Activated naive CD4-positive, alpha-beta T cell treated with anti-CD3 and anti-CD28 coated beads for 36 hours (primary cell): ENCODE measurements at regions of chr16 and their contacts with region 1.

Region 1: DNA sequence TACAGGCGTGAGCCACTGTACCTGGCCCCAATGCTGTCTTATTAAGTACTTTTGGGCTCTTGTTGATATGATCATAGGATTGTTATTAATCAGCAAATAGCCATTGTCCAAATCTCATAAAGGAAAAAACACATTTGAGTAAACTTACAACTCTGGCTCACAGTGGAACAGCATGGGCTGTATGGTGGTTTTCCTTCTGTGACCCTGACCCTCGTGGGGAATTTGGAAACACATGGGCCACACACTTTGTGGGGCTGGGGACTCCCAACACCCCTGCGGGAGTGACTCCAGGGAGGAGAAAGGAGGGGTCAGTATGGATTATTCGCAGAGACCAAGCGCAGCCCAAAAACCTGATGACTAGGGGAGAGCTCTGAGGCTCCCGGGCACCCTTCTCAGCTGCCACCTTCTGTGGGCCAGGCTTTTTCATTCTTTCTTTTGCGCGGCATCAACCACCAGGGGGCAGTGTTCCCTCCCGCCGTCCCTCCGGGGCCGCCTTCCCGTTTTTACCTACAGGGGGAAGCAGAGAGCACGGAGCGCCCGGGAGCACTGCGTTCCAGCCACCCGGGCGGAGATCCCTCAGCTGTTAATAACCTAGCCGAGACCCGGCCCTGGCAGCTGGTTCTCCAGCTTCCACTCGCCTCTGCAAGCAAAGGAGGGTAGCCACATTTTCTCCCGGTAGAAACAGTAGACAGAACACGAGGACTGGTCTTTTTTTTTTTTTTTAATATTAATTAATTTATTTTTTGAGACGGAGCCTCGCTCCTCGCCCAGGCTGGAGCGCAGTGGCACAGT is 9.7 kb downstream of the TSNAXIP1 start:
- DNase-seq: peak; percentile 93
- H3K4me3 Mint-ChIP-seq: no peak overlapping the region
- H3K27ac Mint-ChIP-seq: no peak overlapping the region
- H3K4me1 Mint-ChIP-seq: peaks cover 4% of the 10 kb centered on the region
- H3K27me3 Mint-ChIP-seq: no peaks in the 10 kb centered on the region

Region 2: DNA sequence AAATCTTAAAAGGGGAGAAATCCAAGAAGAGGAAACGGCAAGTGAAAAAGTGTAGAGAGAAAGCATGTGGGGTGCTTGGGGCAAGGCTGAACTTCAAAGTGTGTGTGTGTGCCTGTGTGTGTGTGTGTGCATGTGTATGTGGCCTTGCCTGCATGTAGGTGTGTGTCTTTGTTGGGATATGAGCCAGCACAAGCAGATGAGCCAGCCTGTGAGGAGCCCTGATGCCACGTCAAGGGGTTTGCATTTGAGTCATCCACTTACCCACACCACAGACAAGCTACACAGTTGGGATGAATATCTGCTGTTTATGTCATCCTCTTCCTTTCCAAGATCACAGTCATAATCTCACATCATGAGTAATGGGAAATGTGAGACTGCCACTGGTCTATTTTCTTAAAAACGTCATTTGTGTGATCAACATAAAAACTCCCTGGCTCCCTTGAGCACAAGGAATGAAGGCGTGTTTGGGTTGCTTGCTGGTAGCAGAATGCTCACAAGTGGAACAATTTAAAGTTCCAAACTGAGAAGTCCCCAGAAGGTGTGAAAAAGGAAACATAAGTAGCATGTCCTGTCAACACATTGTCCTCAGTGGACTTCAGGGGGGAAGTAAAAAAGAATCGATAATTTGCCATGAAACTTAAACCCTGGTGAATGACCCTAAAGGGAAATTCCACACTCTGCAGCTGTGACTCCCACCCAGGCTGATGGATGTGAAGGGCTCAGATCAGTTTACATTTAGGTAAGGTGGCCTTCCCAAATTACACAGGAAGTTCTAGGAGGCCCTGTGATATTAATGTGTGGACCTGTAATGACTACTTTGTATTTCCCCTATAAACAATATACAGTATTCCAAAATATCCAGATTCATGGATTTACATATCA is 504.6 kb before region 1 on chr16:
- CTCF ChIA-PET with region 1: no interaction called
- intact Hi-C with region 1: no loop called
- DNase-seq: peak; percentile 98
- H3K4me3 Mint-ChIP-seq: peak overlapping the region; percentile 13
- H3K27ac Mint-ChIP-seq: peak overlapping the region; percentile 96
- H3K4me1 Mint-ChIP-seq: peaks cover 44% of the 10 kb centered on the region
- H3K27me3 Mint-ChIP-seq: no peaks in the 10 kb centered on the region

Region 3: GRCh38 chr16:67800338-67800926 is 16.0 kb before region 1 on chr16:
- CTCF ChIA-PET with region 1: interaction called, 39 read pairs
- intact Hi-C with region 1: no loop called
- DNase-seq: no peak
- H3K4me3 Mint-ChIP-seq: no peak overlapping the region
- H3K27ac Mint-ChIP-seq: peak overlapping the region; percentile 53
- H3K4me1 Mint-ChIP-seq: peaks cover 61% of the 10 kb centered on the region
- H3K27me3 Mint-ChIP-seq: no peaks in the 10 kb centered on the region

Region 4: DNA sequence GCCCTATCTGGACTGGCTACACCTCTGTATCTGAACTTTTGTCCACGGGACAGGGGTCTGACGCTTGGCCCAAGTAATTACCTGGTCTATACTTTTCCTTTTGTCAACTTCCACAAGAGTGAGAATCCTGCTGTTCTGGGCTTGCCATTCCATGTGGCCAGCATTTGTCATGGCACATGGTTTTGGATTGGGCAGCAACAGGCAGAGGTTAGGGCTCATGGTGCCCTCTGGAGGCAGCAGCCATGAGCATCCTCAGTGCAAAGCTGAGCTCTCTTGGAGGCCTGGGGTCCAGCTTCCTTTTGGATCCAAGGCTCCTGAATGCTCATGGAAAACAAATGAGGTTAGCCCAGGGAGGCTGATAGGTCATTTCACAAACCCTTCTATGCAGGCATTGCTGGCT is 48.9 kb after region 1 on chr16:
- CTCF ChIA-PET with region 1: interaction called, 11 read pairs
- intact Hi-C with region 1: loop called (anchors 1 kb)
- DNase-seq: peak; percentile 39
- H3K4me3 Mint-ChIP-seq: no peak overlapping the region
- H3K27ac Mint-ChIP-seq: no peak overlapping the region
- H3K4me1 Mint-ChIP-seq: peaks cover 7% of the 10 kb centered on the region
- H3K27me3 Mint-ChIP-seq: no peaks in the 10 kb centered on the region

Region 5: DNA sequence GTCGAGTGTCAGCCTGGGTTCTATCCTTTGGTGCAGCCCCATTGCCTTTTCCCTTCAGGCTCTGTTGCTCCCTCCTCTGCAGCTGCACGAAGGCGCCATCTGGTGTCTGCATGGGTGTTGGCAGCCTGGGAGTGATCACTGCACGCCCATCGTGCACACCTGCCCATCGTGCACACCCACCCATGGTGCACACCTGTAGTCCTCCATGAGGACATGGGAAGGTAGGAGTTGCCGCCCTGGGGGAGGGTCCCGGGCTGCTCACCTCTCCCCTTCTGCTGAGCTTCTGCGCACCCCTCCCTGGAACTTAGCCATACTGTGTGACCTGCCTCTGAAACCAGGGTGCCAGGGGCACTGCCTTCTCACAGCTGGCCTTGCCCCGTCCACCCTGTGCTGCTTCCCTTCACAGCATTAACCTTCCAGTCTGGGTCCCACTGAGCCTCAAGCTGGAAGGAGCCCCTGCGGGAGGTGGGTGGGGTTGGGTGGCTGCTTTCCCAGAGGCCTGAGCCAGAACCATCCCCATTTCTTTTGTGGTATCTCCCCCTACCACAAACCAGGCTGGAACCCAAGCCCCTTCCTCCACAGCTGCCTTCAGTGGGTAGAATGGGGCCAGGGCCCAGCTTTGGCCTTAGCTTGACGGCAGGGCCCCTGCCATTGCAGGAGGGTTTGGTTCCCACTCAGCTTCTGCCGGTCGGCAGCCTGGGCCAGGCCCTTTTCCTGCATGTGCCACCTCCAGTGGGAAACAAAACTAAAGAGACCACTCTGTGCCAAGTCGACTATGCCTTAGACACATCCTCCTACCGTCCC is 112.3 kb after region 1 on chr16:
- CTCF ChIA-PET with region 1: interaction called, 12 read pairs
- intact Hi-C with region 1: loop called (anchors 1 kb)
- DNase-seq: peak; percentile 91
- H3K4me3 Mint-ChIP-seq: no peak overlapping the region
- H3K27ac Mint-ChIP-seq: no peak overlapping the region
- H3K4me1 Mint-ChIP-seq: peaks cover 2% of the 10 kb centered on the region
- H3K27me3 Mint-ChIP-seq: no peaks in the 10 kb centered on the region

Region 6: DNA sequence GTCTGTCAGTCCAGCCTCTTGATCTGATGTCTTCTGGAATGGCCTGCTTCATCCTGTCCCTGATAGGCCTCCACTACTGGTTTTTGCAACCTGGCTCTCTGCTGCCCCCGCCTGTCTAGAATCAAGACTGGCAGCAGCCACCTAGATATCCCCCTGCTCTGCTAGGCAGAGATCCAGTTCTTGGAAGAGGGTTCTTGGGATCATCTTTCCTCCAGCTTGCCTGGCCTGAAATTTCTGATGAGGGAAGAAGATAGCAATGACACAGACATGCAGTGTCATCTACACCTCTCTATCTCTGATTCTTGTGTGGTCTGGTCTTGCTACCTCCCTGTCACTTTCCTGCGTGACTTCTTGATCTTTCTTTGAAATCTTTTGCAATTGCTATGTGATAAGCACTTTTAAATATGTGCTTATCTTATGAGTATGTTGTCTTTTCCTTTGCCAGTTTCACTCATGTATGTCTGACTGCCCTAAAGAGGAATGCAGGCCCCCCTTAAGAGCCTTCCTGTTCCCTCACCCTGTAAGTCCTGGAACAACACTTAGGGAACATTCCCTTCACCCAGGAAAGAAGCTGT is 248.4 kb after region 1 on chr16:
- CTCF ChIA-PET with region 1: interaction called, 3 read pairs
- intact Hi-C with region 1: loop called (anchors 1 kb)
- DNase-seq: peak; percentile 88
- H3K4me3 Mint-ChIP-seq: no peak overlapping the region
- H3K27ac Mint-ChIP-seq: no peak overlapping the region
- H3K4me1 Mint-ChIP-seq: peaks cover 61% of the 10 kb centered on the region
- H3K27me3 Mint-ChIP-seq: no peaks in the 10 kb centered on the region